ENCODE measurements at regions of chr17 and their contacts with region 1.

Region 1: DNA sequence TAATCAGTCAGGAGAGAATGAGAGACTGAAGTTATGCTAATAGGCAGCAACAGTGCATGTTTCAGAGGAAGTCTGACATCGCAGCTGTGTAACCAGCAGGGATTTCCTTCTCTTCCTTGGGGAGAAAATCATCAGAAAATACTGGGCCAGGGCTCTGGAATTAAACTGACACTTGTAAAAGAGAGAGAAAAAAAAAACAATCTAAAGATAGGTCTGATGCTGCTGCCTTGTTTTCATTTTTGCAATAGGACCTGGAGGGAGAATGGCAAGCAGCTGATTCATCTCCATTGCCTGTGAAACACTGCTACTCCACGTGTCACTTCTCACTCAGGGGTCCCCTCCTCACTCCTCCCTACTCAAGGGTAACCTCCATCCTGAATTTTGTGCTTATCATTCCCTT is 17.7 kb upstream of the CORO6 start:
- DNase-seq: no peak
- ATAC-seq: peak; percentile 7 to 12

Region 2: DNA sequence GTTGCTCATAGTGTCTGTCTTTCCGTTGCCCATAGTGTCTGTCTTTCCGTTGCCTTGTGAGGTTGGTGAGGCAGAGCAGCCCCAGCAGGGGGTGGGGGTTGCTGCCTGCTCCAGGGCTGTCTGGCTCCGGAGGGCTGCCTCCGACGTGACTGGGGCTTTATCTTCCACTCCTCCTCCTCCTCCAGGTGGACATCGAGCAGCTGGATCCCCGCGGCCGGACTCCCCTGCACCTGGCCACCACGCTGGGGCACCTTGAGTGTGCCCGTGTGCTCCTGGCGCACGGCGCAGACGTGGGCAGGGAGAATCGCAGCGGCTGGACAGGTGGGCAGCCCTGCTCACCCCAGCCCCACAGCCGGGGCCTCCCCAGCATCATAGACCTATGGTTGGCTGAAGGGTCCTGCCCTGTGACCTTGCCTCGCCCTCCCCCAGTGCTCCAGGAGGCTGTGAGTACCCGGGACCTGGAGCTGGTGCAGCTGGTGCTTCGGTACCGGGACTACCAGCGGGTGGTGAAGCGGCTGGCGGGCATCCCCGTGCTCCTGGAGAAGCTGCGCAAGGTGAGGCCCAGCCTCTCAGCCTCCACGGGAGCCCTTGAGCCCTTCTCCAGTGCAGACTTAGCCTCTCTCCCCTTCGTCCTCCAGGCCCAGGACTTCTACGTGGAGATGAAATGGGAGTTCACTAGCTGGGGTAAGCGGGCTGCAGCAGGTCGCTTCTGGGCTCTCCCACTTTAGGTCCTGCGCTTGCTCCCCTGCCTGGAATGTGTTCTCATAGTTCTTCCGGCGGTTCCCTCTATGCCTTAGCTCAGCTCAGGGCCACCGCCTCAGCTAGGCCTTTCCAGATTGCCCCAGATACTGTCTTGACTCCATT is 32.6 kb before region 1 on chr17:
- intact Hi-C with region 1: no loop called
- DNase-seq: no peak
- ATAC-seq: no peak

Region 3: GRCh38 chr17:29760761-29761696 is 120.6 kb after region 1 on chr17:
- intact Hi-C with region 1: loop called in 1 of 2 experiments (anchors 5 kb)
- DNase-seq: peak; percentile 94
- ATAC-seq: peak; percentile 99

Region 4: GRCh38 chr17:29777663-29778062 is 137.2 kb after region 1 on chr17:
- intact Hi-C with region 1: loop called (anchors 5 kb)
- DNase-seq: no peak
- ATAC-seq: no peak